PC-9 (cell line): ENCODE measurements at regions of chr4 and their contacts with region 1.

Region 1: GRCh38 chr4:142535009-142535408 is 311.1 kb downstream of the INPP4B start:
- DNase-seq: peak in 1 of 2 experiments; percentile 44
- H3K4me3 ChIP-seq: no peak overlapping the region
- H3K27ac ChIP-seq: no peak overlapping the region
- H3K4me1 ChIP-seq: peaks cover 8% of the 10 kb centered on the region
- H3K27me3 ChIP-seq: no peaks in the 10 kb centered on the region
- CTCF ChIP-seq: no peak

Region 2: DNA sequence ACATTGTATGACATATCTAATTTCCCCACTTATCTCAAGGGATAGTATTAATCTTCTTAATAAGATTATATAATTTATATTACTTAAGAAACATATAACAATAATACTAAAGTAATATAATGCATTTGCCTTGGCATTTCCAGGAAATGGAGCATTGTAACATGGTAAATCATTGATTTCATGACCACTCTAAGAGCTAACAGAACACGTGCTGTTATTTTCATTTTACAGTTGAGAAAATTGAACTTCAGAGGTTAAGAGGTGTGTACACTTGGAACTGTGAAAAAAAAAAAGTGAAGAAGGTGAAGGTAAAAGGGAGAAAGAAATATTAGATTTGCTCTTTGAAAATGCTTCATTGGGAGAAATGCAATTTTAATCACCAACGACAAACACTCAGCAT is 376.0 kb before region 1 on chr4:
- CTCF ChIA-PET with region 1: no interaction called
- POLR2A ChIA-PET with region 1: interaction called, 16 read pairs
- intact Hi-C with region 1: no loop called
- DNase-seq: no peak
- H3K4me3 ChIP-seq: no peak overlapping the region
- H3K27ac ChIP-seq: no peak overlapping the region
- H3K4me1 ChIP-seq: no peaks in the 10 kb centered on the region
- H3K27me3 ChIP-seq: no peaks in the 10 kb centered on the region
- CTCF ChIP-seq: no peak

Region 3: GRCh38 chr4:142497606-142498005 is 37.4 kb before region 1 on chr4:
- CTCF ChIA-PET with region 1: no interaction called
- POLR2A ChIA-PET with region 1: no interaction called
- intact Hi-C with region 1: loop called (anchors 5 kb)
- DNase-seq: peak in 1 of 2 experiments; percentile 15
- H3K4me3 ChIP-seq: no peak overlapping the region
- H3K27ac ChIP-seq: no peak overlapping the region
- H3K4me1 ChIP-seq: no peaks in the 10 kb centered on the region
- H3K27me3 ChIP-seq: no peaks in the 10 kb centered on the region
- CTCF ChIP-seq: no peak

Region 4: DNA sequence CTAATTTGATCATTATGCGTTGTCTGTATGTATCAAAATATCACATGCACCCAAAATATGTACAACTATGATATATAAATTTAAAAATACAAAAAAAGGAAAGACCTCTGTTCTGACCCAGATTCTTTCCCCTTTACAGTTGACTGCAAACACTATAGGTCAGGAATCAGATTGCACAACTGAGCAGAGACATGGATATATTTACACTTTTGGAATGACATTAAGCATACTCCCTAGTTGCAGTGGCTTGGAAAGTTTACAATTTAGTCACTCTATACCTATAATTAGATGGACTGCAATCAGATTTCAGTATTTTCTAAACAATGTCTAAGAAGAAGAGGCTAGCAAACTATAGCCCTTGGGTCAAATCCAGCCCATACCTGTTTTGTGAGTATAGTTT is 409.6 kb after region 1 on chr4:
- CTCF ChIA-PET with region 1: no interaction called
- POLR2A ChIA-PET with region 1: no interaction called
- intact Hi-C with region 1: no loop called
- DNase-seq: no peak
- H3K4me3 ChIP-seq: no peak overlapping the region
- H3K27ac ChIP-seq: no peak overlapping the region
- H3K4me1 ChIP-seq: no peaks in the 10 kb centered on the region
- H3K27me3 ChIP-seq: no peaks in the 10 kb centered on the region
- CTCF ChIP-seq: no peak